ENCODE measurements at regions of chr13 and their contacts with region 1.

Region 1: DNA sequence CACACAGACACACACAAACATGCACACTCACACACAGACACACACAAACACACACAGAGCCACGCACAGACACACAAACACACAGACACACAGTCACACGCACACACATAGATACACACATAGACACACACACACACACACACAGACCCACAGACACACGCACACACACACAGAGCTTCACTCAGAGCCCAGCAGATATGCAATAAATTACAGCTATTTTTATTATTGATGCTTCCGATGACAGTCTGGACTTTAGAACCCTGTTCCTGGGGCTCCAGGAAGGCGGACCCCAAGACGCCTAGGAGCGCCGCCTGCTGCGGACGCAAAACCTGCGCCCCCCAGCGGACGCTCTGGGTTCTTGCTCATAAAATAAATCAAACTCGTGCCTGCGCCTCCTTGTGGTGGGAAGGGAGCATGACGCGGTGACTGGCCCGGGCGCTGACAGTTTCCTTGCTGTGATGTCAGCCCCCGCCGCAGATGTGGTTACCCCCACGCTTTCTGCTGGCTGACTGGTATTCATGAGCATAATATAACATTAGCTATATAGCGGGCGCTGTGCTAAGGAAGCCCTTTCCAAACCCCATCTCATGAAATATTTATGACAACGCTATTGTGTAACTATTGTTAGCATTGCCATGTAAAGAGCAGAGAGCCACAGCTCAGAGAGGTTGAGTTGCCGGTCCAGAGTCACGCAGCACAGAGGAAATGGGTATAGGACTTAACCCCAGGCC is 64.4 kb upstream of the TM9SF2 start:
- DNase-seq: peak; percentile 82 to 85
- ATAC-seq: peak; percentile 49 to 71 (median 60)
- H3K4me3 ChIP-seq: peak overlapping the region in 1 of 10 donors; percentile 8
- H3K27ac ChIP-seq: no peak overlapping the region
- H3K4me1 ChIP-seq: peaks cover 0 to 33% (median 8%) of the 10 kb centered on the region in 9 donors
- H3K27me3 ChIP-seq: peaks cover 0 to 35% (median 24%) of the 10 kb centered on the region in 7 donors
- CTCF ChIP-seq: peak; percentile 95 to 100 (median 100)

Region 2: DNA sequence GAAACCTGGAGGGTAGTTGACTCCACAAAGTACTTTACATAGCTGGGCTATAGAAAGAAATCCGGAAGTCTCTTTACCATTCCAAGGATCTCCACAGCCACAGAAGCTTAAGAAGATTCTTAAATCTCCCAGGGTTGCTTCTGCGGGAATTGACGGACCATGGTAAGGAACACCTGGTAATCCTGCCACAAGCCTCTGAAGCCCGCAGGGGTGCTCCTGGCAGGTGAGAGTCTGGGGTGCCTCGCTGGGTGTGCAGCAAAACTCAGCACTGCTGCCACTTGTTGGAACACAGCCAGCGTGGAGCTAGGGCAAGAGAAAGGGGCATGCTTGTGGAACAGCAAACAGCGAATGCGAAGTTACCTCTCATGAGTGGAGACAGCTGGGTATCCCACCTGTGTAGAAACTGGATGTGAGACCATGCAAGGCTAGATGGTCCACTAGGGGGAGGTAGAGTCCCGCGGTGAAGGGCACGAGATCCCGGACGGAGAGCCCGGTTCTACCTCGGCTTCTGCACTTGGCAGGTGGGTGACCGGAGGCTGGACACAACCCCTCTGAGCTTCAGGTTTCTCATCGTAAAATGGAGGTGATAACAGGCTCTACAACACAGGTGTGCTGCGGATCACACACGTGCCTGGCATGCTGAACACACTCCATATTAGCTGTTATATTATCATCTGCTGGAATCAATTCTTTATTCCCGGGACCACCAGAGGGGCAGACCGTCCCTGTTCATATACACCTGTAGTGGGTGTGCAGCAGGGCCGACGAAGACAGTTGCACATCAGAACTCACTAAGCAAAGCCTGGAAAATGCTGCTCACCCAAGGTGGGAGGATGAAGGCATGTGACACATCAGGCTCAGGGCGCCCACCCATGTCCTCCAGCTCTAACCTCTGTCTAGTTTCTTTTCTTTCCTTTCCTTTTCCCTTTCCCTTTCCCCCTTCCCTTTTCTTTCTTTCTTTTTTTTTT is 260.3 kb before region 1 on chr13:
- intact Hi-C with region 1: loop called (anchors 1 to 5 kb)
- DNase-seq: peak; percentile 67 to 73
- ATAC-seq: peak; percentile 80 to 96 (median 90)
- H3K4me3 ChIP-seq: no peak overlapping the region
- H3K27ac ChIP-seq: no peak overlapping the region
- H3K4me1 ChIP-seq: peaks cover 0 to 20% (median 0%) of the 10 kb centered on the region in 9 donors
- H3K27me3 ChIP-seq: peaks cover 0 to 48% (median 15%) of the 10 kb centered on the region in 7 donors
- CTCF ChIP-seq: peak; percentile 89 to 98 (median 96)

Region 3: GRCh38 chr13:99269627-99270241 is 167.1 kb before region 1 on chr13:
- intact Hi-C with region 1: loop called (anchors 1 to 10 kb)
- DNase-seq: no peak
- ATAC-seq: peak in 7 of 8 donors; percentile 50 to 89 (median 72)
- H3K4me3 ChIP-seq: no peak overlapping the region
- H3K27ac ChIP-seq: peak overlapping the region in 1 of 10 donors; percentile 86
- H3K4me1 ChIP-seq: peaks cover 0 to 40% (median 4%) of the 10 kb centered on the region in 9 donors
- H3K27me3 ChIP-seq: no peaks in the 10 kb centered on the region
- CTCF ChIP-seq: peak; percentile 26 to 84 (median 65)

Region 4: GRCh38 chr13:99386911-99387788 is 49.7 kb before region 1 on chr13:
- intact Hi-C with region 1: loop called in 1 of 10 experiments (anchors 5 kb)
- DNase-seq: peak in 1 of 2 donors; percentile 62
- ATAC-seq: no peak
- H3K4me3 ChIP-seq: no peak overlapping the region
- H3K27ac ChIP-seq: peak overlapping the region in 1 of 10 donors; percentile 56
- H3K4me1 ChIP-seq: peaks cover 0 to 25% (median 4%) of the 10 kb centered on the region in 9 donors
- H3K27me3 ChIP-seq: no peaks in the 10 kb centered on the region
- CTCF ChIP-seq: peak in 7 of 9 donors; percentile 23 to 79 (median 50)

Region 5: DNA sequence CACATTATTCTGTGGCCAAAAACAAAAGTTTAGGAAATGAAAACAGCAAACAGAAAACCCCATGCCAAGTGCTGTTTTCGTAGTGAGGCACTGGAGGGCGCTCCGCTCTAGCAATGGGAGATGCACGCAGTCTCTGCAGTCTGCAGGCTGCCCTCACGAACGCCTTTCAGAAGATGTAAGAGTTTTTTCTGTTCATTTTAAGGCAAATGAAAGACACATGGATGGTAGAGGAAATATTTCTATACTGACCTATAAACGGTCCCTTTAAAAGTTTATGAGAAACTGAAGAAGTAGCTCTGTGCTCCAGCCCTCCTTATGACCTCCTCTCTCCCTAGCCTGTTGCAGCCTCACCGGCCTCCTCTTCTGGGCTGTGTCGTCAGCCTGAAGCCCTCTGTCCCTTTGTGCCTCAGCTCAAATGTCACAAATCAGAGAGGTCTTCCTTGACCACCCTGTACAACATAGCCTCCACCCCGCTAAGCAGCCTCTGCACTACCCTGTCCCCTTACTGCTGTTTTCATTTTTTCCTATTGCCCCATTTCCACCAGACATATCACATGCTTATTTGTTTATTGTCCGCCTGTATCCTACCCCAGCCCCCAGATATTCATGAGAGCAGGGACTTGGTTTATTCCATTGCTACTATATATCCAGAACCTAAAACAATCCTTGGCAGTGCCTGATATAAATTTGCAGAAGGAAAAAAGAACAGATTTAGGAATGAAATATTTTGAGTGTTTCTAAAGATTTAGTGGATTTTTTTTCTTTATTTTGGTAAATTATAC is 180.8 kb after region 1 on chr13:
- intact Hi-C with region 1: loop called in 4 of 10 experiments (anchors 5 to 10 kb)
- DNase-seq: peak; percentile 23 to 38
- ATAC-seq: peak in 7 of 8 donors; percentile 57 to 73 (median 65)
- H3K4me3 ChIP-seq: no peak overlapping the region
- H3K27ac ChIP-seq: no peak overlapping the region
- H3K4me1 ChIP-seq: peaks cover 0 to 10% (median 6%) of the 10 kb centered on the region in 9 donors
- H3K27me3 ChIP-seq: no peaks in the 10 kb centered on the region
- CTCF ChIP-seq: peak; percentile 14 to 79 (median 61)

Region 6: GRCh38 chr13:99916366-99917103 is 479.7 kb after region 1 on chr13:
- intact Hi-C with region 1: no loop called
- DNase-seq: peak in 1 of 2 donors; percentile 19
- ATAC-seq: peak in 7 of 8 donors; percentile 51 to 70 (median 66)
- H3K4me3 ChIP-seq: no peak overlapping the region
- H3K27ac ChIP-seq: no peak overlapping the region
- H3K4me1 ChIP-seq: no peaks in the 10 kb centered on the region
- H3K27me3 ChIP-seq: peaks cover 0 to 52% (median 31%) of the 10 kb centered on the region in 7 donors
- CTCF ChIP-seq: peak; percentile 52 to 93 (median 82)